Posterior cingulate gyrus (tissue), 11 donors: ENCODE measurements at regions of chr13 and their contacts with region 1.

Region 1: DNA sequence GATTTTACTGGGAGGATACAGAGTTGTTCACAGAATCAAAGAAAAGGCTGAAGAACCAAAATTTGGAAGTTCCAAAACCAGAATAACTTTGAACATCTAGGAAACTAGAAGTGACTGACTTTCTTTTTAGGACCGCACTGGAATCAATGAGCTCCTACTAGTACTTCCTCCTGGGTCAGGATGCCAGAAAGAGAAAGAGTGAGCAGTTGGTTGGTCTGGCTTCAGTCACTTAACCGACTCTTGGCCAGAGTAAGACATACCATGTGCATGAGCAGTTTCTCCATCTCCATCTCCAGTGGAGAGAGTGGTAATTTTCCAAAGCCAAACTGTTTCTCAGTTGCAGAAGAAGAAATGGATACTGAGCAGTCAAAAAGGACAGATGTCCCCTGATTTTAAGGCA is 27.1 kb upstream of the MTUS2 start:
- DNase-seq: no peak

Region 2: GRCh38 chr13:28324181-28324789 is 468.7 kb before region 1 on chr13:
- intact Hi-C with region 1: loop called (anchors 10 kb)
- DNase-seq: peak in 5 of 10 donors; percentile 21 to 86 (median 46)

Region 3: DNA sequence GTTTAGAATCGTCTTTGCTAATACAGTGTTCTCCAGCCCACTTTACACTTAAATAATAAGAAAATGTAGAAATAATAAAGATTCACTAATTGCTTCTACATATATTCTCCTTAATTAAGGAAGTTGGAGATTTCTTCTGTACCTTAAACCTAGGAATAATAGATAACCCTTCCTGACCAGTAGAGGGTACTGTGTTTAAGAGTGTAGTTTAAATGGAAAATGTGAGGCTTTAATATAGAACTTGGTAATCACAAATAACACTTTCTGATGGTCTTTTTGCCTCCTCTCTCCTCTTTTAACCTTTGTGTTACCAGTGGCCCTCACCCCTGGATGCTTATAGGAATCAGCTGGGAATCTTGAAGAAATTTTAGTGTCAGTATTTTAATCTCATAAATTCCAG is 113.4 kb before region 1 on chr13:
- intact Hi-C with region 1: loop called (anchors 10 kb)
- DNase-seq: no peak

Region 4: DNA sequence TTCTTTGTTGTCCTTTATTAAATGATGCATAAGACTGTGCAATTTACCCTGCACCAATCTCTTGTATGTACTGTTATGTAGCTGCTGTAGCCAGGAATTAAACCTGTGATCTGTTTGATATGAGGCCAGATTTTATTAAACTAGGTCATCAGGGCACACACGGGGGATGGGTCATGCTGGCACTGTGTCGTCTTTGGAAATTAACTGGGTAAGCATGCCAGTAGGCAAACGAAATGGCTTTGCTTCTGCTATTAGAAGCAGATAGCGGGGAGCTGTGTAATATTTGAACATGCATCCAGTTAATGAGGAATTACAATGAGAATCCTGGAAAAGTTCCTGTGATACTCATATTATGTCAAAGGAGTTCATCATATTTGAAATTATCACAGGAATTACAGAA is 50.6 kb after region 1 on chr13:
- intact Hi-C with region 1: no loop called
- DNase-seq: no peak